Calu3 (cell line): ENCODE measurements at regions of chr9 and their contacts with region 1.

Region 1: DNA sequence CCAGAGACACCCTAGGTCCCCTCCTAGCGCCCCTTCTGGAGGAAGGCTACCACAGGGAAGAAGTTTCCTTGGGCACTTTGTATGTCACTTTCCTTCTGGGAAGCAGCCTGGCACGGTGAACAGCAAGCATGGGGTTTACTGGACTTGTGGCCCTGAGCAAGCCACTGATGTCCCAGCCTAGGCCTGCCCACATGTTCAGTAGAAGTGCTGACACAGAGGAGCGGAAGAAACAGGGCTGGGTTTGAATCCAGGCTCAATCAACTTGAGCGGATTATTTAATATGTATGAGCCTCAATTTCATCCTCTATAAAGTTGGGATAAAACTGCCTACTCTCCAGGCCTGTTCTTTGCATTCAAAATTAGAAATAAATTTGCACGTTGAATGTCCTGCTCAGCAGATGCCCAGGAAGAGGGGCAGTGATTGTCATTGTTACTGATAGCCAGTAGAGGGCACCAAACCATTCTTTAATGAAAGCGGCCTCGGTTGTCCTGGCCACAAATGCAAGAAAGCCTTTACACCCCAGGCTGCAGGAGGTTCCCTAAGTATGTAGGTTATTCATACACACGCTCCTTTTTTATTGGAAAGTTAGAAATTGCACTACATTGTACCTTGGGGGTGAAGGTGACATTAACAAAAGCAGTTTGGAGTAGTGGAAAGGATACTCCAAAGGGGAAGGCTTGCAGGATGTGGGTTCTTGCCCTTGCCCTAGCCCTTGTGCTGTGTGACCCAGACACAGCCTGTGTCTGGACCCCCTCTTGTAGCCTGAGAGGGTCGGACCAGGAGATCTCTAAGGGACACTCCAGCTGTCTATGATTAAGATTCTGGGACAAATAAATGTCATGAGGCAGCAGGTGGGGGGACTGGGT is 13.4 kb upstream of the XPA start:
- DNase-seq: peak; percentile 40
- H3K4me3 Mint-ChIP-seq: no peak overlapping the region
- H3K27ac Mint-ChIP-seq: no peak overlapping the region
- H3K4me1 Mint-ChIP-seq: peaks cover 20% of the 10 kb centered on the region
- H3K27me3 Mint-ChIP-seq: no peaks in the 10 kb centered on the region
- CTCF ChIP-seq: peak; percentile 45

Region 2: DNA sequence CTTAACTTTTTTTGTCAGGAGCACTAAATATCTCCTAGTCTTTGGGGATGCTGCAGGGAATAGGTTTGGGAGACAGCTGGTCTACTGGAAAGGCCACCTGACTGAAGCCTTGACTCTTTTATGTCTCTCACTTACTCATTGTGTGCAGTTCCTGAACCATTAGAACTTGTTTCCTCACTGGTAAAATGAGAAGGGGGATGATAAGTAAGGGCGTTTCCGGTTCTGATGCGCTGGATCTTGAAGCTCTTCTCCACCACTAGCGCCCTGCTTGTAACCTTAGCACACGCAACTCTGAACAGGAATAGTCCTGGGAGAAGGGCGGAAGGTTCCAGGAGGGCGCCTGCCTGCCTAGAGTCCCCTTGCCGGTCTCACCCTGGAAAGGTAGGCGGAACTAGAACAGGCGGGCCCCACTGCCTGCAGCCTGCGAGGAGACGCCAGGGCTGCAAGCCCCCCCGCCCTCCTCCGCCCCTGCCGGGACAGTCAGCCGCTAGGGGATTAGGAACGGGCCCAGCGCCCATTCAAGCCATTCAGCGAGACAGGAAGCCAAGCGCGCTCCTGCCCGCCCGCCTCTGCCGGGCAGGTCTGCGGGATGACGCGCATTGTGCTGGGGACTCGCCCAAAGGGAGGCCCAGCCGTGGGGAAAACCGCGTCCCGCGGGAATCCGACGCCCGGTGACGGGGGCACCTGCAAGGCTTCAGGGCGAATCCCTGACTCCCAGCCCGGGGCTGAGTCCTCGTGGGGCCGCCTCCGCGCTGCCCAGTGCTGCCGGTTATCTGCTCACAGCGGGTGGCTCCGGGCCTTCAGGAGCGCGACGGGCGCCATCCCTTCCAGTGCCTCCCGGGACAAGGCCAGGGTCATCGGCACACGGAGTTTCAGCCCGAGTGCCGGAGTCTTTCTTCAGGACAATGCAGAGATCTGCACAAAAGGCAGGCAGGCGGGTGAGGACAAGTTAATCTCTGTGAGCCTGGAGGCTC is 30.5 kb after region 1 on chr9:
- CTCF ChIA-PET with region 1: no interaction called
- intact Hi-C with region 1: no loop called
- DNase-seq: no peak
- H3K4me3 Mint-ChIP-seq: no peak overlapping the region
- H3K27ac Mint-ChIP-seq: no peak overlapping the region
- H3K4me1 Mint-ChIP-seq: no peaks in the 10 kb centered on the region
- H3K27me3 Mint-ChIP-seq: no peaks in the 10 kb centered on the region
- CTCF ChIP-seq: no peak

Region 3: DNA sequence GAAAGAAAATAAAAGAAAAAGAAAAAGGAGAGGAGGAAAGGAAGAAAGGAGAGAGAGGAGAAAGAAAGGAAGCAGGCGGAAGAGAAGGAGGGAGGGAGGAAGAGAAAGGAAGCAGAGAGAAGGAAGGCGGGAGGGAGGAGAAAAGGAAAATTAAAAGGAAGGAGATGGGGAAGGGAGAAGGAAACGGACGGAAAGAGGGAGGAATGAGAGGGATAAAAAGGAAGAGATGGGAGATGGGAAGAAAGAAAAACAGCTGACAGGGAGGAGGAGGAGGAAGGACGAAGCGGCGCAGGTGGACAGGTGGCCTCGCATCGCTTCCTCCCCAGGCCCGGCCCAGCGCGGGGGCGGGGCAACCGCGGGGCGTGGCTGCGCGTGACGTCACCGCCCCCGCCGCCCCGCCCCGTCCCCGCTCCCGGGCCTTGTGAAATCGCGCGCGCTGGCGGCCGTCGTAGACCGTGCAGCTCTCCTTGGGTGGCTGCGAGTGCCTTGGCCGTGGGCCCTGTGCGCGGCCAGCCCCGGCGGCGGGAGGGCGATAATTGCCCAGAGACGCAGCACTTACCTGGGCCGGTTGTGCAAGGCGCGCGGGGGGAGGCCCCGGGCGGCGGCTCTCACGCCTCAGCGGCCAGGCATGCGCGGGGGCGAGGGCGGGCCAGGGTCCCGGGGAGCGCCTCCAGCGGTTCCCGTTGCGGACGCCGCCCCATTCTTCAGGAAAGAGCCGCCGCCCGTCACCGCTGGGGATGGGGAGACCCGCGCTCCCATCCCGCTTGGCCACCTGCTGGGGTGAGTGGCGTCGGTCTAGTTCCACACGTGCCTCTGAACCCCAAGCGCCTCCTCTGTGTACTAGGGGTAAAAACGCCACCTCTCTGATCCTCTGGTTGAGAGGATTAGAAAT is 92.8 kb after region 1 on chr9:
- CTCF ChIA-PET with region 1: no interaction called
- intact Hi-C with region 1: loop called (anchors 5 kb)
- DNase-seq: peak; percentile 74
- H3K4me3 Mint-ChIP-seq: peak overlapping the region; percentile 61
- H3K27ac Mint-ChIP-seq: peak overlapping the region; percentile 83
- H3K4me1 Mint-ChIP-seq: peaks cover 21% of the 10 kb centered on the region
- H3K27me3 Mint-ChIP-seq: no peaks in the 10 kb centered on the region
- CTCF ChIP-seq: peak; percentile 13

Region 4: GRCh38 chr9:97853844-97854695 is 143.5 kb after region 1 on chr9:
- CTCF ChIA-PET with region 1: interaction called, 4 read pairs
- intact Hi-C with region 1: loop called (anchors 5 kb)
- DNase-seq: peak; percentile 52
- H3K4me3 Mint-ChIP-seq: peak overlapping the region; percentile 96
- H3K27ac Mint-ChIP-seq: peak overlapping the region; percentile 47
- H3K4me1 Mint-ChIP-seq: no peaks in the 10 kb centered on the region
- H3K27me3 Mint-ChIP-seq: no peaks in the 10 kb centered on the region
- CTCF ChIP-seq: peak; percentile 73

Region 5: GRCh38 chr9:97900738-97901565 is 190.4 kb after region 1 on chr9:
- CTCF ChIA-PET with region 1: no interaction called
- intact Hi-C with region 1: loop called (anchors 1 kb)
- DNase-seq: peak; percentile 34
- H3K4me3 Mint-ChIP-seq: no peak overlapping the region
- H3K27ac Mint-ChIP-seq: no peak overlapping the region
- H3K4me1 Mint-ChIP-seq: no peaks in the 10 kb centered on the region
- H3K27me3 Mint-ChIP-seq: no peaks in the 10 kb centered on the region
- CTCF ChIP-seq: peak; percentile 65